HCT116 (cell line): ENCODE measurements at regions of chr6 and their contacts with region 1.

Region 1: GRCh38 chr6:133895573-133896343 is 6.8 kb downstream of the TCF21 start:
- DNase-seq: no peak
- ATAC-seq: peak; percentile 30
- H3K4me3 ChIP-seq: peak overlapping the region in 1 of 2 experiments; percentile 19; a peak in 1 of 4 replicates
- H3K27ac ChIP-seq: no peak overlapping the region
- H3K4me1 ChIP-seq: peaks cover 0 to 20% of the 10 kb centered on the region in 2 experiments; a peak in 2 of 4 replicates
- H3K27me3 ChIP-seq: peaks cover 24% of the 10 kb centered on the region; the same call in 1 of the 2 replicates
- CTCF ChIP-seq: no peak
- POLR2A ChIP-seq: no peak
- RAD21 ChIP-seq: no peak

Region 2: GRCh38 chr6:133587546-133588160 is 308.1 kb before region 1 on chr6:
- CTCF ChIA-PET with region 1: no interaction called
- POLR2A ChIA-PET with region 1: no interaction called
- RAD21 ChIA-PET with region 1: no interaction called
- intact Hi-C with region 1: loop called (anchors 5 kb)
- DNase-seq: no peak
- ATAC-seq: no peak
- H3K4me3 ChIP-seq: no peak overlapping the region
- H3K27ac ChIP-seq: no peak overlapping the region
- H3K4me1 ChIP-seq: peaks cover 0 to 14% of the 10 kb centered on the region in 2 experiments; a peak in 1 of 4 replicates
- H3K27me3 ChIP-seq: no peaks in the 10 kb centered on the region
- CTCF ChIP-seq: no peak
- POLR2A ChIP-seq: no peak
- RAD21 ChIP-seq: no peak

Region 3: GRCh38 chr6:133877116-133877515 is 18.6 kb before region 1 on chr6:
- CTCF ChIA-PET with region 1: no interaction called
- POLR2A ChIA-PET with region 1: interaction called, 4 read pairs
- RAD21 ChIA-PET with region 1: no interaction called
- intact Hi-C with region 1: loop called (anchors 1 kb)
- DNase-seq: no peak
- ATAC-seq: no peak
- H3K4me3 ChIP-seq: no peak overlapping the region
- H3K27ac ChIP-seq: no peak overlapping the region
- H3K4me1 ChIP-seq: no peaks in the 10 kb centered on the region
- H3K27me3 ChIP-seq: no peaks in the 10 kb centered on the region
- CTCF ChIP-seq: no peak
- POLR2A ChIP-seq: no peak
- RAD21 ChIP-seq: no peak